ENCODE measurements at regions of chrX and their contacts with region 1.

Region 1: DNA sequence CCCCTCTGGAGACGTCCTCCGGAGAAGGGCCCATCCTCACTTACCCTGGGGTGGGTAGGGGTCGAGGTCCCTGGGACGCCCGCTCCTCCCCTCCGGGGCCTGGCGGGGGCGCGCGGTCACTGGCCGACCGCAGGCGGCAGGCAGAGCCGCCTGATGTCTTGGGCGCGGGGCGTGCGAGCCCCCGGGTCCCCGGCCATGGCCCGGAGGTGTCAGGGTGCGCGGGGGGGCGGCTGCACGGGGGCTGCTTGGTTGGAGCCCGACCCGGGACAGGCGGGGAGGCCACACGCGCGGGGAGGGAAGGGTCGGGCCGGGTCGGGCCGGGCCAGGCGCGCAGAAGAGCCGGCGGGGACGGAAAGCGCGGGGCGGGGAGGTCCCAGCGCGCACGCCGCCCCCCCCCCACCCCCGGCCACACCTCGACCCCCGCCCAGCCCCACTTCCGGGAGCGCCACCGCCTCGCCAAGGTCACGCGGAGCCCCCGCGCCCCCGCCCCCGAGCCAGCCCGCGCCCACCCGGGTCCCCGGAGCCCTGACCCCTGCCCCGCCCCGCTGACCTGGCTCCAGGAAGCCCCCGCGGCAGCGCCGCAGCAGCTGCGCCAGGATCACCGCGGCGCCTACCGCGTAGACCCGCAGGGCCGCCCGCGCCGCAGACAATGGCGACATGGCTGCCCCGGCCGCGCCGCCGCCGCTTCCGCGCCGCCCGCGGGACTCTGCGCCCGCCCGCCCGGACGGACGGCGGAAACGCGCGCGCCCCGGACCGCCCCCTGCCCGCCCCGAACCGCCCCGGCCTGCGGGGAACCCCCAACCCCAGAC is at the starts of genes DHRSX and ZBED1:
- DNase-seq: peak; percentile 60
- ATAC-seq: peak; percentile 68 to 80
- total RNA-seq, gene DHRSX: 21.0 to 34.0 TPM
- total RNA-seq, gene ZBED1: 37.7 to 45.0 TPM

Region 2: GRCh38 chrX:2325076-2325784 is 175.2 kb before region 1 on chrX:
- intact Hi-C with region 1: loop called in 1 of 2 experiments (anchors 10 kb)
- DNase-seq: peak; percentile 88
- ATAC-seq: peak; percentile 69 to 77

Region 3: DNA sequence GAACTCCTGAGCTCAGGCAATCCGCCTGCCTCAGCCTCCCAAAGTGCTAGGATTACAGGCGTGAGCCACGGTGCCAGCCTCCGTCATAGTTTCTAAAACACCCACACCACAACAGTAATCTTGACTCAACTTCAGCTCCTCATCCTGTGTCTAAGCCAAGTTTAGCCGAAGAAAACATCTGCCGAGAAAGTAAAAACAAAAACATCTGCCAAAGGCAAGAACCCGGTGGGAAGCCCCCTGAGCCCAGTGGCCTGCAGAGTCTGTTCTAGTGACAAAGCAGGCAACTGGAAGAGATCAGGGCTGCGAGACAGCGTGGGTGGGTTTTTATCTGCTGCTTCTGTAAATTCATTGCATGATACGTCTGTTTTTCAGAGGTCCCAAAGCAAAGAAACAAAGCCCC is 164.0 kb after region 1 on chrX:
- intact Hi-C with region 1: no loop called
- DNase-seq: peak; percentile 50
- ATAC-seq: peak in 1 of 2 donors; percentile 90

Measured in left cardiac atrium (tissue), 4 donors.